BJ (cell line): ENCODE measurements at regions of chr1 and their contacts with region 1.

Region 1: GRCh38 chr1:205658943-205659581 is 21.2 kb downstream of the SLC45A3 start:
- DNase-seq: no peak
- H3K4me3 ChIP-seq: no peak overlapping the region
- H3K27me3 ChIP-seq: no peaks in the 10 kb centered on the region
- CTCF ChIP-seq: peak; percentile 92

Region 2: DNA sequence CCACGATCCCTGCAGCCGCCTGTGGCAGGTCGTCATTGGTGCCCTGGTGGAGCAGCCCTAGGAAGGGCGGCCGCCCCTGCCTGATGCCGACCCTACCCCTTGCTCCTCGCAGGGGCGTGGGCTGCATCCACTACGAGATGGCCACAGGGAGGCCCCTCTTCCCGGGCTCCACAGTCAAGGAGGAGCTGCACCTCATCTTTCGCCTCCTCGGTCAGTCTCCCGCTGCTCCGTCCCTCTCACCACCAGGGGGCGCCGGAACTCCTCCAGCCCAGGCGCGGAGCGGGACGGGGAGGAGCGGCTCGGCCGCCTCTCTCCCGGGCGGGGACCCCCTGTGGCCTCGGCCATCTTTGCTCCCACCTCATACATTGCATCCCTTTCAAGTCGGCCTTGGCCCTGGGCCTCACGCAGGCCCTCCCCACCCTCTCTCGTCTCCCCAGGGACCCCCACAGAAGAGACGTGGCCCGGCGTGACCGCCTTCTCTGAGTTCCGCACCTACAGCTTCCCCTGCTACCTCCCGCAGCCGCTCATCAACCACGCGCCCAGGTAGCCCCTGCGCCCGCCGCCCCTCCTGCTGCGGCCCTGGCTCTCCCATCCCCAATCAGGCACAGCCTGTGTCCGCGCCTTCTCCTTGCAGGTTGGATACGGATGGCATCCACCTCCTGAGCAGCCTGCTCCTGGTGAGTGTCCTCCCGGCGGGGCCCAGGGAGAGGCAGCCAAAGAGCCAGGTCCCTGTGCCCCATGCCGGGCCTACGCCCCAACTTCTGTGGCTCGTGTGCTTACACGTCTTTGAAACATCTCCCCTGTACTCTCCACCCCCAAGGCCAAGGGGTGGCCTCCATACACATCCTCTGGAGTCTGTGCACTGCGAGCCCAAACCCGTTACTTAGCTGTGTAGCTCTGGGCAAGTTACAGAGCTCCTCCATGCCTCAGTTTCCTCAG is 129.9 kb before region 1 on chr1:
- CTCF ChIA-PET with region 1: interaction called, 308 read pairs
- POLR2A ChIA-PET with region 1: no interaction called
- DNase-seq: no peak
- H3K4me3 ChIP-seq: peak overlapping the region; percentile 37
- H3K27me3 ChIP-seq: no peaks in the 10 kb centered on the region; the same call in 1 of the 2 replicates
- CTCF ChIP-seq: peak; percentile 96

Region 3: DNA sequence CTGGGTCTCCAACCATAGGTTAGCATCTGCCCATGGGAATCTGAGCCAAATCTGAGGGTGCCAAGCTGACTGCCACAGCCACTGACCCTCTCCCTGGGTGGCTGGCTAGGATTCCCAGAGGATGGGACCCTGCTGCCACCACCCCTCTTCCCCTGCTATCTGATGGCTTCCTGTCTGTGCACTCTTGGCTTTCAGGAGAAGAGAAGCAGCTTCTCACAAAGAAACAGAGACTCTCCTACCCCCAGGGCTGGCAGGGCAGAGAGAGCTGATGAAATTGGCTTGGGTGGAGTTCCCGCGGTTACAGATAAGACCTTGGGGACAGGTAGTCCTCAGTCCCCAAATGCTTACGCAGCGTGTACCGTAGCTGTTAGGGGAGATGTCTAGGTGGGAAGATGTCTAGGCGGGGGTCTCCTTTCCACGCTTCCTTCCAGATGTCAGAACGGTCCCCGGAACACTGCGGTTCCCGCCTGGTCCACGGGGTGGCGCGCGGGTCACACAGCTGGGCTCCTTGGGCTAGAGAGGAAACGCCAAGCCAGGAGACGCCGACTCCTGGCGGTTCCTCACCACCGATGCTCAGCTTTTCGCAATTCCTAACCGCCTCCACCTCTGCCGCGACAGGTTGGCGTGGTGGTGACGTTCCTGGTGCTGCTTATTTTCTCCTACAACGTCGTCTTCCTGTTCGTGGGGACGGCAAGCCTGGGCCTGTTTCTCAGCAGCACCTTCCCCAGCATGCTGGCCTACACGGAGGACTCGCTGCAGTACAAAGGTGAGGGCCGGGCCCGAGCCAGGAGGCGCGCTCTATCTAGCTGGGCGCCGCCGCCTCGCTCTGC is 67.3 kb before region 1 on chr1:
- CTCF ChIA-PET with region 1: interaction called, 426 read pairs
- POLR2A ChIA-PET with region 1: interaction called, 36 read pairs
- DNase-seq: no peak
- H3K4me3 ChIP-seq: peak overlapping the region; percentile 37
- H3K27me3 ChIP-seq: no peaks in the 10 kb centered on the region
- CTCF ChIP-seq: peak; percentile 98

Region 4: GRCh38 chr1:205645519-205645918 is 13.5 kb before region 1 on chr1:
- CTCF ChIA-PET with region 1: interaction called, 42 read pairs
- POLR2A ChIA-PET with region 1: no interaction called
- DNase-seq: no peak
- H3K4me3 ChIP-seq: no peak overlapping the region
- H3K27me3 ChIP-seq: no peaks in the 10 kb centered on the region
- CTCF ChIP-seq: no peak

Region 5: GRCh38 chr1:205711104-205712020 is 52.3 kb after region 1 on chr1:
- CTCF ChIA-PET with region 1: interaction called, 242 read pairs
- POLR2A ChIA-PET with region 1: no interaction called
- DNase-seq: peak; percentile 20
- H3K4me3 ChIP-seq: no peak overlapping the region
- H3K27me3 ChIP-seq: no peaks in the 10 kb centered on the region
- CTCF ChIP-seq: peak; percentile 87

Region 6: DNA sequence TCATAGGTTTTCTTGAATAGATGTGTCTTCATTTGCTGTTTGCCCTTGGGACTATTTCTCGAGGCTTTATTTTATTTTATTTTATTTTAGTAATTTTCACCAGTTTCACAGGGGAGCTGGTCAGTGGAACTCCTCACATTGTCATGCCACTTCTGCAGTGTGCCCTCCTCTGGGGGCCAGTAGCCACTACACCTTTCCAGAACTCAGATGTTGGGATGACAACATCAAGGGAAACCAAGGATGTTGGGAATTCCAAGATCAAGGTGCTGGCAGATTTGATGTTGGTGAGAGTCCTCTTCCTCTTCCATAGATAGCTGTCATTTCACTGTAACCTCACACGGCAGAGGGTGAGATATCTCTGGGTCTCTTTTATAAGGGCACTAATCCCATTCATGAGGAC is 248.7 kb after region 1 on chr1:
- CTCF ChIA-PET with region 1: interaction called, 25 read pairs
- POLR2A ChIA-PET with region 1: no interaction called
- DNase-seq: no peak
- H3K4me3 ChIP-seq: no peak overlapping the region
- H3K27me3 ChIP-seq: no peaks in the 10 kb centered on the region
- CTCF ChIP-seq: peak; percentile 76